ENCODE measurements at regions of chr16 and their contacts with region 1.

Region 1: GRCh38 chr16:68286153-68287074 is 22.1 kb downstream of the SLC7A6 start:
- DNase-seq: no peak
- H3K4me3 ChIP-seq: no peak overlapping the region
- H3K27ac ChIP-seq: no peak overlapping the region
- H3K27me3 ChIP-seq: no peaks in the 10 kb centered on the region
- CTCF ChIP-seq: no peak

Region 2: DNA sequence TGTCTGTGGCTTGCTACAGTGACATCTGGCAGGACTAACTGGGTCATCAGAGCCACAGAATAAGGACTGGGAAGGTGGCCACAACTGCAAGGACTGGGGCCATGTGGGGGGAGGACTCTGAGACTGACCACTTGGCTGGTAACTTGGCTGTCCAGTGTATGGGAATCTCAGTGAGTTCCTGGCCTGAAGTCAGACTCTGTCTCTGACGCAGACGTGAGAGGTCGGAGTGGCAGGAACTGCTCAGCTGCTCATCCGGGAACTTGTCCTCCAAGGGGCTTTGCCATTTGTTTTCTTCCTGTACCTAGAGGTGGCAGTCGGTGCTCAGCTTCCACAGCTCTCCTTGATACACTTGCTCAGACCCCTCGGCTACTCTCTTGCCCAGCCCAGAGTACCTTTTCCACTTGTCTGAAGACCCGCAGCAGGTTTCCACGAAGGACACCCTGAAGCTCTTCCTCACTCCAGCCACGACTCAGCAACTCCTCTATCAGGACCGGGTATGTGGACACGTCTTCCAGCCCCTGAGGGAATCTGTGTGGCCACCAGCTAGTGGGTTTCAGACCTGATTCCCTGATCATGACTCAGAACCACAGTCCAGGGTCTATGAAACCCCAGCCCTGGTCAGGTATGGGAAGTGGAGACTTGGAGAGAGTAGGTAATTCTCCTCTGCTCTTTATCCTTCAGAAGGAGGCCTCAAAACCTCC is 298.8 kb before region 1 on chr16:
- CTCF ChIA-PET with region 1: no interaction called
- POLR2A ChIA-PET with region 1: no interaction called
- DNase-seq: no peak
- H3K4me3 ChIP-seq: no peak overlapping the region
- H3K27ac ChIP-seq: no peak overlapping the region
- H3K27me3 ChIP-seq: no peaks in the 10 kb centered on the region
- CTCF ChIP-seq: no peak

Region 3: DNA sequence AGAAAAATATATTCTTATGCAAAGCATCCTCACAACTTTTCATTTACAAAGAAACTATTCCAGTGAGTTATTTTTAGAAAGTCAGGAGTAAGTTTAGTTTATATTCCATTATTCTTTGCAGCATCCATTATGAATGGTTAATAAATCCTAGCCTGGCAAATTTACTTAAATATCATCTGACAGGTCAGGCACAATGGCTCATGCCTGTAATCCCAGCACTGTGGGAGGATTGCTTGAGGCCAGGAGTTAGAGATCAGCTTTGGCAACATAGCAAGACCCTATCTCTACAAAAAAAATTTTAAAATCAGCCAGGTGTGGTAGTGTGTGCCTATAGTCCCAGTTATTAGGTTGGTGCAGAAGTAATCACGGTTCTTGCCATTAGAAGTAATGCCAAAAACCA is 63.3 kb before region 1 on chr16:
- CTCF ChIA-PET with region 1: no interaction called
- POLR2A ChIA-PET with region 1: interaction called, 10 read pairs
- DNase-seq: no peak
- H3K4me3 ChIP-seq: no peak overlapping the region
- H3K27ac ChIP-seq: no peak overlapping the region
- H3K27me3 ChIP-seq: no peaks in the 10 kb centered on the region
- CTCF ChIP-seq: no peak

Measured in AG04450 (cell line).